Activated CD8-positive, alpha-beta T cell treated with anti-CD3 and anti-CD28 coated beads, Interleukin-2, amount 10 ng/mL, durations not matched to agents 7 days and 5 days (primary cell): ENCODE measurements at regions of chr2 and their contacts with region 1.

Region 1: GRCh38 chr2:3558205-3559014 is at the start of gene RNASEH1:
- DNase-seq: peak; percentile 97
- ATAC-seq: peak; percentile 98
- H3K4me3 Mint-ChIP-seq: peak within 1 kb of the TSS; percentile 89
- H3K27ac Mint-ChIP-seq: peak within 1 kb of the TSS; percentile 97
- H3K4me1 Mint-ChIP-seq: peaks cover 44% of the 10 kb centered on the region
- H3K27me3 Mint-ChIP-seq: no peaks in the 10 kb centered on the region
- total RNA-seq, gene RNASEH1: 27.1 to 28.9 TPM

Region 2: DNA sequence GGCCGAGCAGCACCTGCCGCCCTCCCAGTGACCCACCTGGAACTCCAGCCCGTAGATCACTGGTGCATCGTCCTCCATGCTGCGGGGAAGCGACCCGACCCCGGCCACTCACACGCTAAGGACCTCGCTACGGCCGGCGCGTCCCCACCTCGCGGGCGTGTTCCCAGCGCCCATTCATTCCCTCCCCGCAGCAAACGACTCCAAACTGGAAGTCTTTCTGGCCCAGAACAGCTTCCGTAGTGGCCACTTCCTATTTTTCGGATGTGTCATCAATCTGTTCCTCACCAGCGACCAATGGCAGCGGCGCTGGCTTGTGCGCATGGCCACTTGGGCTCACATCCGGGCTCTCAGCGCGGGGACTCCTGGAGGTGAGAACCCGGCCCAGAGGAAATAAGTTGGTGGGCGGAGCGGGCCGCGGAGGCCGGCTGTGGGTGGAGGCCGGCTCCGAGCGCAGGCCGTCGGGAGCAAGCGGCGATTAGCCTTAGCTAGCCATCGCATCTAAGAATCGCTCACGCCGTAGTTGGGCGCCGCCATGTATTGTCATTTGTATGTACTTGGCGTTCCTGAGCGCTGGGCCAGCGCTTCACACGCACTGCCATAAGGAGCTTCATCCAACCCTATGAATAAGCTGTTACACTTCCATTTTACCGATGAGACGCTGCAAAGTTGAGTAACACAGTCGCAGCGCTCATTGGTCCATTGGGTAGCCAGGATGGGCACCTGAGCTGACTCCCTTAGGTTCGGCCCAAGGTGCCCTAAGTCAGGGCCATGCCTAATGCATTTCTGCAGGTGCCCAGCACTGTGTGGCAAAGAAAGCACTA is 180.6 kb before region 1 on chr2 and contains the start of gene EIPR1:
- CTCF ChIA-PET with region 1: interaction called, 3 read pairs
- POLR2A ChIA-PET with region 1: interaction called, 11 read pairs
- DNase-seq: peak; percentile 98
- ATAC-seq: peak; percentile 87
- H3K4me3 Mint-ChIP-seq: peak within 1 kb of the TSS; percentile 96
- H3K27ac Mint-ChIP-seq: peak within 1 kb of the TSS; percentile 98
- H3K4me1 Mint-ChIP-seq: peaks cover 41% of the 10 kb centered on the region
- H3K27me3 Mint-ChIP-seq: no peaks in the 10 kb centered on the region
- total RNA-seq, gene EIPR1: 38.9 to 41.4 TPM

Region 3: GRCh38 chr2:3518496-3519254 is 39.7 kb before region 1 on chr2:
- CTCF ChIA-PET with region 1: no interaction called
- POLR2A ChIA-PET with region 1: interaction called, 12 read pairs
- DNase-seq: peak; percentile 98
- ATAC-seq: peak; percentile 85
- H3K4me3 Mint-ChIP-seq: peak overlapping the region; percentile 85
- H3K27ac Mint-ChIP-seq: peak overlapping the region; percentile 87
- H3K4me1 Mint-ChIP-seq: peaks cover 38% of the 10 kb centered on the region
- H3K27me3 Mint-ChIP-seq: no peaks in the 10 kb centered on the region

Region 4: GRCh38 chr2:3575534-3576262 is 17.3 kb after region 1 on chr2:
- CTCF ChIA-PET with region 1: interaction called, 4 read pairs
- POLR2A ChIA-PET with region 1: interaction called, 47 read pairs
- DNase-seq: peak; percentile 42
- ATAC-seq: peak; percentile 55
- H3K4me3 Mint-ChIP-seq: peak overlapping the region; percentile 96
- H3K27ac Mint-ChIP-seq: peak overlapping the region; percentile 93
- H3K4me1 Mint-ChIP-seq: peaks cover 53% of the 10 kb centered on the region
- H3K27me3 Mint-ChIP-seq: no peaks in the 10 kb centered on the region

Region 5: DNA sequence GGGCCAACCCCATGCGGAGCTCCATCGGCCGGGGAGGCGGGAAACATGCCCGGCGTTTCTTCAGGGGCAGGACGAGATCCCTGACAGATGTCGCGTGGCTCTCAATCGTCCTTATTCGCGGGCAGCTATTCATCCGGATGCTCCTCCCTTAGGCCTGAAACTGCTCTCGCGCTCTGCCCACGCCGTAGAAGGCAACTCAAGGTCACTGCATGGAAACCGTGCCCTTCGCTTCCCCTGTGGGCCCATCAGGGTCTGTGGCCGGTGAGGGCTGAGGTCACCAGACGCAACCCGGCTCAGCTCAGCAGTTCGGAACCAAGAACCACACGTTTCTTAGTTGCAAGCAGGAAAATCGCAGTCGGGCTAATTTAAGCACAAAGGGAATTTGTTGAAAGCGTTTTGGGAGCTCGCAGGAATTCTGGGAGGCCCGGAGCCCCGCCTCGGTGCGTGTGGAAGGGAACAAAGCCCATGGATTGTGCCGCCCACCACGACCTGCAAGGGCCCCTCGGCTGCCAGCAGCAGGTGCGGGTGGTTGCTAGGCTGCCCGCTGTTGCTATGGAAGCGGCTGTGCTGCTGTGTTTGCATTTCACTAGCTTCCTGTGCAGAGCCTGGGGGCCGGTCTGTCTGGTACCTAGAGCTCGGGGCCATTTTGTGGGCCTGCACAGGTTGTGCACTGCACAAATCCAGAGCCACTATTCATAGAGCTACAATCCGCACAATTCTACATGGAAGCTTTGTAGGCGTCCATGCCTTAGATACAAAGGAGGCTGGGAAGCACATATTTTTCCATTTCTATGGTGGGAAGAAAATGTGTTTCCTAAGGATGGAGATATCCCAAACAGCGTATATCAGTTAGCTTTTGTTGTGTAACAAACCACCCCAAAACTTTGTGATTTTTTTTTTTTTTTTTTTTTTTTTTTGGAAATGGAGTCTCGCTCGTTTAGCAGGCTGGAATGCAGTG is 93.6 kb after region 1 on chr2:
- CTCF ChIA-PET with region 1: interaction called, 5 read pairs
- POLR2A ChIA-PET with region 1: interaction called, 10 read pairs
- DNase-seq: peak; percentile 84
- ATAC-seq: peak; percentile 83
- H3K4me3 Mint-ChIP-seq: peak overlapping the region; percentile 69
- H3K27ac Mint-ChIP-seq: peak overlapping the region; percentile 88
- H3K4me1 Mint-ChIP-seq: peaks cover 13% of the 10 kb centered on the region
- H3K27me3 Mint-ChIP-seq: peaks cover 3% of the 10 kb centered on the region